ENCODE measurements at regions of chr3 and their contacts with region 1.

Region 1: GRCh38 chr3:10725067-10725466 is 91.0 kb upstream of the SLC6A11 start:
- DNase-seq: no peak
- ATAC-seq: no peak
- H3K4me3 ChIP-seq: no peak overlapping the region
- H3K27ac ChIP-seq: no peak overlapping the region
- H3K4me1 ChIP-seq: no peaks in the 10 kb centered on the region
- H3K27me3 ChIP-seq: no peaks in the 10 kb centered on the region
- CTCF ChIP-seq: no peak

Region 2: DNA sequence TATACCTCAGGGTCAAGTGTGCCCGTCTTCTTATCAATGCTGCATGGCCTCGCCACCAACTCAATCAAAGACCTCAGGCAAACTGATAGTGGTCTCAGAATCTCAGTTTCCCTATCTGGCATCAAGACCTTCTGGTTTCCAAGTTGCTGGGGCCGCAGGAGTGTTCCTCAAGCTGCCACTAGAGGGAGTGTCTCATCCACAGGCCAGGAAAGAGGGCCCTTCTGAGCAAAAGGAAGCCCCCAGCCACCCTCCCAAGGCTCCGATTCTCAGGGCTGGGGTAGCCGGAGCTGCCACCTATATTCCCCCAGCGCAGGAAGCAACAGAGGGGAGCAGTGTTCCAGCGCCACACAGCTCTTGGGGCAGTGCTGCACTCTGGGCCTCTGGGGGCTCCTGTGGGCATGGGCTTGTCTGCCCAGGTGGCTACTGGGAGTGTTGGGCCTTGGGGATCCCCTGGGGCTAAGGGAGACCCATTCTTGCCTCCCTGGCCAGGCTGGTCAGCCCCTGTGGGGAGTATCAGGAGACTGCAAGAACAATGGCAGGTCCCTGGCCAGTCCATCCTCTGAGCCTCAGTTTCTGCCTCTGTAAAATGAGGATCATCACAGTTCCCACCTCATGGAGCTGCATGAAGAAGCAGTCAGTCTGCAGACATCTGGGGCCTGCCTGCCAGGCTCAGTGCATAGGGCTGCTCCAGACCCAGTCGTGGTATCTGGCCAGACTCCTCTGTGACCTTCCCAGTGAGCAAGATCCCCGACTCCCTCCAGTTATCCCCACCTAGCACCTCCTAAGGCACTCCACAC is 380.7 kb before region 1 on chr3:
- CTCF ChIA-PET with region 1: interaction called, 11 read pairs
- POLR2A ChIA-PET with region 1: no interaction called
- in situ Hi-C with region 1: no loop called
- intact Hi-C with region 1: no loop called
- DNase-seq: no peak
- ATAC-seq: peak; percentile 60
- H3K4me3 ChIP-seq: no peak overlapping the region
- H3K27ac ChIP-seq: no peak overlapping the region
- H3K4me1 ChIP-seq: no peaks in the 10 kb centered on the region
- H3K27me3 ChIP-seq: no peaks in the 10 kb centered on the region
- CTCF ChIP-seq: peak; percentile 94

Region 3: GRCh38 chr3:10515884-10516495 is 209.1 kb before region 1 on chr3:
- CTCF ChIA-PET with region 1: interaction called, 10 read pairs
- POLR2A ChIA-PET with region 1: no interaction called
- in situ Hi-C with region 1: no loop called
- intact Hi-C with region 1: no loop called
- DNase-seq: no peak
- ATAC-seq: no peak
- H3K4me3 ChIP-seq: no peak overlapping the region
- H3K27ac ChIP-seq: no peak overlapping the region
- H3K4me1 ChIP-seq: no peaks in the 10 kb centered on the region
- H3K27me3 ChIP-seq: no peaks in the 10 kb centered on the region
- CTCF ChIP-seq: no peak

Region 4: GRCh38 chr3:10583798-10584705 is 141.0 kb before region 1 on chr3:
- CTCF ChIA-PET with region 1: no interaction called
- POLR2A ChIA-PET with region 1: no interaction called
- in situ Hi-C with region 1: no loop called
- intact Hi-C with region 1: no loop called
- DNase-seq: no peak
- ATAC-seq: no peak
- H3K4me3 ChIP-seq: no peak overlapping the region
- H3K27ac ChIP-seq: no peak overlapping the region
- H3K4me1 ChIP-seq: no peaks in the 10 kb centered on the region
- H3K27me3 ChIP-seq: peaks cover 8% of the 10 kb centered on the region
- CTCF ChIP-seq: no peak

Region 5: GRCh38 chr3:10666621-10667020 is 58.4 kb before region 1 on chr3:
- CTCF ChIA-PET with region 1: no interaction called
- POLR2A ChIA-PET with region 1: no interaction called
- in situ Hi-C with region 1: no loop called
- intact Hi-C with region 1: no loop called
- DNase-seq: no peak
- ATAC-seq: no peak
- H3K4me3 ChIP-seq: no peak overlapping the region
- H3K27ac ChIP-seq: no peak overlapping the region
- H3K4me1 ChIP-seq: no peaks in the 10 kb centered on the region; the same call in 1 of the 2 replicates
- H3K27me3 ChIP-seq: peaks cover 4% of the 10 kb centered on the region; the same call in 1 of the 2 replicates
- CTCF ChIP-seq: no peak

Region 6: GRCh38 chr3:10709110-10709781 is 15.8 kb before region 1 on chr3:
- CTCF ChIA-PET with region 1: no interaction called
- POLR2A ChIA-PET with region 1: no interaction called
- in situ Hi-C with region 1: no loop called
- intact Hi-C with region 1: no loop called
- DNase-seq: no peak
- ATAC-seq: peak; percentile 41; the same call in 1 of the 2 replicates
- H3K4me3 ChIP-seq: no peak overlapping the region
- H3K27ac ChIP-seq: no peak overlapping the region
- H3K4me1 ChIP-seq: no peaks in the 10 kb centered on the region
- H3K27me3 ChIP-seq: peaks cover 10% of the 10 kb centered on the region
- CTCF ChIP-seq: 0 out of 2 replicates have a peak, but pooled peaks have one; percentile 2

Region 7: GRCh38 chr3:10753964-10754363 is 28.9 kb after region 1 on chr3:
- CTCF ChIA-PET with region 1: no interaction called
- POLR2A ChIA-PET with region 1: no interaction called
- in situ Hi-C with region 1: no loop called
- intact Hi-C with region 1: no loop called
- DNase-seq: no peak
- ATAC-seq: no peak
- H3K4me3 ChIP-seq: no peak overlapping the region
- H3K27ac ChIP-seq: no peak overlapping the region
- H3K4me1 ChIP-seq: no peaks in the 10 kb centered on the region
- H3K27me3 ChIP-seq: peaks cover 5% of the 10 kb centered on the region; the same call in 1 of the 2 replicates
- CTCF ChIP-seq: no peak